ENCODE measurements at regions of chr6 and their contacts with region 1.

Region 1: GRCh38 chr6:111011360-111012142 is 29.7 kb downstream of the RPF2 start:
- DNase-seq: no peak
- ATAC-seq: peak; percentile 69
- H3K4me3 Mint-ChIP-seq: no peak overlapping the region
- H3K27ac Mint-ChIP-seq: no peak overlapping the region
- H3K4me1 Mint-ChIP-seq: peaks cover 4% of the 10 kb centered on the region
- H3K27me3 Mint-ChIP-seq: no peaks in the 10 kb centered on the region

Region 2: DNA sequence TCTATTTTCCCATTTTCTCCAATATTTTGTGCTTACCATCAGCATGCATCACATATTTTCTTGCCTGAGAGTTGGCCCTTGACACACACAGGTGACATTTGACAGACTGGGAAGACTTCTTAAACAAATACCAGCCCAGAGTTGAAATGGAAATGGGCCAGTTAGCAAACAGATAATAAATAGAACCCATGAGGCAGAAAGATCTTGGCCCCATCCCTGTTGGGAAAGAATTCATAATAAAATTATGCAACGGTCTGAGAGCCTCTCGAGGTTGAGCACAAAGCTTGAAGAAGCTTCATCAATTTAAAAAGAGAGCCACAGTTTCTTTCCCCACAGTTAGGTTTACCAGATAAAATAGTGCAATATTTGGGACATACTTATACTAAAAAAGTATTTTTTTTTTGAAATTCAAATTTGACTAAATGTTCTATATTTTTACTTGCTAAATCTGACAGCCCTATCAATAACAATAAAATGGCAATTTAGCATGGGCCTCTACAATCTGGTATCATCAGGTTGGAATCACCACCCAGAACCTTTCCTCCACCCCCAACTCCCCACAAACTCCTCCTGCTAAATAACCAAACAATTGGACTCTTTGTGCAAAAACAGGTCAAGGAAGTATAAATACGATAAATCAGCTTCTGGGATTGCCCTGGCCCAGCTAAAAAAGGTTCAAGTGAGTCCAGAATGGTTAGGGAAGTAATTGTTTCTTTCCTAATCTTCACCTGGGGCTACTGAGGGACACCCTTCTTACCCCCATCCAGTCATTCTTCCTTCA is 1759.1 kb before region 1 on chr6:
- CTCF ChIA-PET with region 1: no interaction called
- POLR2A ChIA-PET with region 1: no interaction called
- DNase-seq: no peak
- ATAC-seq: no peak
- H3K4me3 Mint-ChIP-seq: no peak overlapping the region
- H3K27ac Mint-ChIP-seq: no peak overlapping the region
- H3K4me1 Mint-ChIP-seq: peaks cover 2% of the 10 kb centered on the region
- H3K27me3 Mint-ChIP-seq: no peaks in the 10 kb centered on the region

Region 3: GRCh38 chr6:110981202-110981600 is 30.4 kb before region 1 on chr6:
- CTCF ChIA-PET with region 1: interaction called, 12 read pairs
- POLR2A ChIA-PET with region 1: no interaction called
- DNase-seq: no peak
- ATAC-seq: peak; percentile 1
- H3K4me3 Mint-ChIP-seq: peak overlapping the region; percentile 97
- H3K27ac Mint-ChIP-seq: peak overlapping the region; percentile 99
- H3K4me1 Mint-ChIP-seq: peaks cover 32% of the 10 kb centered on the region
- H3K27me3 Mint-ChIP-seq: no peaks in the 10 kb centered on the region

Region 4: GRCh38 chr6:111024681-111025080 is 13.1 kb after region 1 on chr6:
- CTCF ChIA-PET with region 1: interaction called, 28 read pairs
- POLR2A ChIA-PET with region 1: no interaction called
- DNase-seq: no peak
- ATAC-seq: no peak
- H3K4me3 Mint-ChIP-seq: no peak overlapping the region
- H3K27ac Mint-ChIP-seq: peak overlapping the region; percentile 61
- H3K4me1 Mint-ChIP-seq: no peaks in the 10 kb centered on the region
- H3K27me3 Mint-ChIP-seq: no peaks in the 10 kb centered on the region

Region 5: DNA sequence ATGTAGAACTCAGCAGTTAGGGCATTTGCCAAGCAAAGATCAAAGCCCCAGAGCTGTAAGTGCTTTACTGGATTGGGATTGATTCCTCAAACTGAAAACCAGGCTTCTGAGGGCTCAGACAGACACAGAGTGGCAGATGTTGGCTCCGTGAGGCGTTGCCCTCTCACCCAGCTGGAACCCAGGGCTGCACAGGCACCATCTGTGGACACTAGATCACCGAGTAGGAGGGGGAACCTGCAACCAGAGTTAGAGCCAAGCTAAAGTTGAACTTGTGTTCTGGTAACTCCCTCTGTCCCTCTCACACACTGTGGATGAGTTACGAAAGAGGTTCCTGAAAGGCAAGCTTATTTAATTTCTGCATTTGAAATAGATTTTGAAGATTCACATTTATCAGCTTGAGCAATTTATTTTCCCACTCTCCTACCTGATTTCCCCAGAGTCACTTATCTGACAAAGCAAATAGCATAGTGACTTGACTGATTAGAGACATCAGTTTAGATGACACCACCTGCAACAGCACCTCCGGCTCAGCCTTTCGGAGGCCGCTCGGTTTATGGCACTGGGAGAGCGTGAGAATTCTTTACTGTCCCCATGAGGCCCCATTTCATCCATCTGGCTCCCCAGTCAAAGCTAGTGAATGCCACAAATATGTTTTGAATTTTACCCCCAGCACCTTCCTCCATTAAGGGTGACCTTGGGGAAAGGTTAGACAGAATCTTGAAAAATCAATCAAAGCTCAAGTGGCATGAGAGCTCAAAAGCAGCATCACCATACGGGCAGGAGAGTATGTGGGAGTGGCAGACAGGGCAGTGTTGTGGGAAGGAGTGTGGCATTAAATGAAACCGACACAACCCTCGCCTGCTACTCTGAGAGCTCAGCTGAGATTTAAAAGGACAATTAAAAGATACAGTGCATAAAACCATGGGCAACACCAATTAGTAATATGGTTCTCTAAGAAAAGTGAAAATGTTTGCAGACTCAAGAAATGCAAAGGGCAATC is 18.8 kb after region 1 on chr6:
- CTCF ChIA-PET with region 1: interaction called, 22 read pairs
- POLR2A ChIA-PET with region 1: no interaction called
- DNase-seq: no peak
- ATAC-seq: no peak
- H3K4me3 Mint-ChIP-seq: no peak overlapping the region
- H3K27ac Mint-ChIP-seq: no peak overlapping the region
- H3K4me1 Mint-ChIP-seq: no peaks in the 10 kb centered on the region
- H3K27me3 Mint-ChIP-seq: no peaks in the 10 kb centered on the region

Region 6: DNA sequence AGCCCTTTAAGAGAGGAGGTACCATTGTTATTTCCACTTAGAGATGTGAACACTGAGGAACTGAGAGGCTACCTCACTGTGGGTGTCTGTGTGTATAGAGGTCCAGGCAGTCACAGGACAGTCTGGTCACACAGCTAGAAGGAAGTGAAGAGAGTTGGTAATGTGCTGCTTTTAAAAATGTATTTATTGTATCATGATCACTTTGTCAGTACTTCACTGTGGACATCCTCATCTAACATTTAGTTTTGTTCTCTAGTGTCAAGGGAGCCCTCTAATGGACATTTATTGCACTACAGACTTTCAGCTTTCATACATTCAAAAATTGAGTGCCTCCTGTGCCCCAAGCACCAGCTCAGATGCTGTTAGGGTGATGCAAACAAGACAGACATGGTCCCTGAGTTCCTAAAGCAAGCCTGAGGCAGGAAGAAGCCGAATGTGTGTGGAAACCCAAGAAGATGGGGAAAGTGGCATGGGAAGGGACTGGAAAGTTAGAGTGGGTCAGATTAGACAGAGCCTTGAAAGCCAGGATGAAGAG is 198.7 kb after region 1 on chr6:
- CTCF ChIA-PET with region 1: interaction called, 46 read pairs
- POLR2A ChIA-PET with region 1: no interaction called
- DNase-seq: peak; percentile 48
- ATAC-seq: peak; percentile 60
- H3K4me3 Mint-ChIP-seq: no peak overlapping the region
- H3K27ac Mint-ChIP-seq: no peak overlapping the region
- H3K4me1 Mint-ChIP-seq: peaks cover 7% of the 10 kb centered on the region
- H3K27me3 Mint-ChIP-seq: no peaks in the 10 kb centered on the region

Region 7: DNA sequence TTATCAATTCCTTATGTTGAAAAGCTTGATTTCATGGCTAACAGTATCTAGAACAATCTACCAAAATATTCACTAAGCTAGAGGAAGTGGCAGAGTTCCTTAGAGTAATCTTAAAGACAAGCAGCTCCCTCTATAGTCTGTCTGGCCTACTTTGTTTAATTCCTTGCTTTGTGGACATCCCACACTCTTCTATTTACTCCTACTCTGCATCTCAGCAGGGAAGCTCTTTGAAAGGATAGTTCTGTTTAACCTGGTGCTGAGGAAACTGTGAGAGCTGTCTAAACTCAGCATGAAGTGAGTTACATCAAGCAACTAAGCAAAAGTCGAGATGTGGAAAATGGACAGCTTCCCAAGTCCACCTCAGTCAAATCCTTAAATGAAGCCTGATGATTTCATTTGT is 467.2 kb after region 1 on chr6:
- CTCF ChIA-PET with region 1: interaction called, 11 read pairs
- POLR2A ChIA-PET with region 1: no interaction called
- DNase-seq: no peak
- ATAC-seq: no peak
- H3K4me3 Mint-ChIP-seq: no peak overlapping the region
- H3K27ac Mint-ChIP-seq: peak overlapping the region; percentile 61
- H3K4me1 Mint-ChIP-seq: peaks cover 33% of the 10 kb centered on the region
- H3K27me3 Mint-ChIP-seq: no peaks in the 10 kb centered on the region

Measured in activated CD8-positive, alpha-beta T cell treated with anti-CD3 and anti-CD28 coated beads, Interleukin-2, amount 10 ng/mL, durations not matched to agents 7 days and 5 days (primary cell).